Calu3 (cell line): ENCODE measurements at regions of chr5 and their contacts with region 1.

Region 1: GRCh38 chr5:82312373-82312856 is 34.3 kb upstream of the RPS23 start:
- DNase-seq: peak; percentile 73
- H3K4me3 Mint-ChIP-seq: no peak overlapping the region
- H3K27ac Mint-ChIP-seq: no peak overlapping the region
- H3K4me1 Mint-ChIP-seq: peaks cover 13% of the 10 kb centered on the region
- H3K27me3 Mint-ChIP-seq: no peaks in the 10 kb centered on the region
- CTCF ChIP-seq: peak; percentile 96

Region 2: GRCh38 chr5:82345108-82345507 is 32.7 kb after region 1 on chr5:
- CTCF ChIA-PET with region 1: interaction called, 4 read pairs
- intact Hi-C with region 1: loop called (anchors 2 kb)
- DNase-seq: no peak
- H3K4me3 Mint-ChIP-seq: no peak overlapping the region
- H3K27ac Mint-ChIP-seq: no peak overlapping the region
- H3K4me1 Mint-ChIP-seq: peaks cover 13% of the 10 kb centered on the region
- H3K27me3 Mint-ChIP-seq: no peaks in the 10 kb centered on the region
- CTCF ChIP-seq: no peak

Region 3: GRCh38 chr5:82635561-82636288 is 323.3 kb after region 1 on chr5:
- CTCF ChIA-PET with region 1: no interaction called
- intact Hi-C with region 1: loop called (anchors 1 kb)
- DNase-seq: peak; percentile 72
- H3K4me3 Mint-ChIP-seq: no peak overlapping the region
- H3K27ac Mint-ChIP-seq: peak overlapping the region; percentile 81
- H3K4me1 Mint-ChIP-seq: peaks cover 61% of the 10 kb centered on the region
- H3K27me3 Mint-ChIP-seq: no peaks in the 10 kb centered on the region
- CTCF ChIP-seq: no peak